HCT116 (cell line): ENCODE measurements at regions of chr16 and their contacts with region 1.

Region 1: GRCh38 chr16:71564155-71564967 is 12.5 kb downstream of the TAT start:
- DNase-seq: no peak
- ATAC-seq: peak; percentile 6
- H3K4me3 ChIP-seq: peak overlapping the region; percentile 65 to 69
- H3K27ac ChIP-seq: peak overlapping the region; percentile 31; the same call in 1 of the 2 replicates
- H3K4me1 ChIP-seq: peaks cover 14 to 18% of the 10 kb centered on the region in 2 experiments
- H3K27me3 ChIP-seq: no peaks in the 10 kb centered on the region
- CTCF ChIP-seq: no peak
- POLR2A ChIP-seq: no peak
- RAD21 ChIP-seq: no peak

Region 2: GRCh38 chr16:71461686-71462648 is 102.4 kb before region 1 on chr16 and contains the start of gene ZNF23:
- CTCF ChIA-PET with region 1: no interaction called
- POLR2A ChIA-PET with region 1: no interaction called
- RAD21 ChIA-PET with region 1: no interaction called
- intact Hi-C with region 1: no loop called
- DNase-seq: peak; percentile 57
- ATAC-seq: peak; percentile 99
- H3K4me3 ChIP-seq: peak within 1 kb of the TSS; percentile 92 to 95
- H3K27ac ChIP-seq: peak within 1 kb of the TSS; percentile 50
- H3K4me1 ChIP-seq: peaks cover 3 to 15% of the 10 kb centered on the region in 2 experiments; a peak in 3 of 4 replicates
- H3K27me3 ChIP-seq: no peaks in the 10 kb centered on the region
- CTCF ChIP-seq: 0 out of 6 replicates have a peak, but pooled peaks of 2 of the 3 experiments have one; percentile 14 to 18
- POLR2A ChIP-seq: peak; percentile 76
- RAD21 ChIP-seq: peak; percentile 50; the same call in 1 of the 2 replicates
- total RNA-seq, gene ZNF23: 11.1 TPM

Region 3: GRCh38 chr16:71618429-71618828 is 54.1 kb after region 1 on chr16:
- CTCF ChIA-PET with region 1: no interaction called
- POLR2A ChIA-PET with region 1: no interaction called
- RAD21 ChIA-PET with region 1: no interaction called
- intact Hi-C with region 1: no loop called
- DNase-seq: no peak
- ATAC-seq: no peak
- H3K4me3 ChIP-seq: no peak overlapping the region
- H3K27ac ChIP-seq: no peak overlapping the region
- H3K4me1 ChIP-seq: no peaks in the 10 kb centered on the region
- H3K27me3 ChIP-seq: no peaks in the 10 kb centered on the region
- CTCF ChIP-seq: no peak
- POLR2A ChIP-seq: no peak
- RAD21 ChIP-seq: no peak

Region 4: GRCh38 chr16:71746442-71747046 is 182.2 kb after region 1 on chr16:
- CTCF ChIA-PET with region 1: no interaction called
- POLR2A ChIA-PET with region 1: no interaction called
- RAD21 ChIA-PET with region 1: no interaction called
- intact Hi-C with region 1: loop called (anchors 1 kb)
- DNase-seq: peak; percentile 26
- ATAC-seq: peak; percentile 61; the same call in 1 of the 2 replicates
- H3K4me3 ChIP-seq: no peak overlapping the region
- H3K27ac ChIP-seq: no peak overlapping the region
- H3K4me1 ChIP-seq: no peaks in the 10 kb centered on the region
- H3K27me3 ChIP-seq: no peaks in the 10 kb centered on the region
- CTCF ChIP-seq: peak; percentile 69 to 87 (median 79); a peak in 5 of 6 replicates
- POLR2A ChIP-seq: no peak
- RAD21 ChIP-seq: peak; percentile 70